Endothelial cell of umbilical vein (primary cell): ENCODE measurements at regions of chr20 and their contacts with region 1.

Region 1: GRCh38 chr20:49713753-49714712 is at the start of gene B4GALT5:
- DNase-seq: peak; percentile 78
- H3K4me3 ChIP-seq: peak within 1 kb of the TSS; percentile 81 to 93 (median 87)
- H3K27ac ChIP-seq: peak within 1 kb of the TSS; percentile 79
- H3K4me1 ChIP-seq: peaks cover 23% of the 10 kb centered on the region
- H3K27me3 ChIP-seq: no peaks in the 10 kb centered on the region
- CTCF ChIP-seq: no peak
- POLR2A ChIP-seq: peak; percentile 46
- total RNA-seq, gene B4GALT5: 58.5 and 70.1 TPM in 2 replicates

Region 2: GRCh38 chr20:49323622-49324238 is 390.3 kb before region 1 on chr20:
- CTCF ChIA-PET with region 1: no interaction called
- POLR2A ChIA-PET with region 1: no interaction called
- dilution Hi-C with region 1: no loop called
- intact Hi-C with region 1: no loop called
- DNase-seq: peak; percentile 89
- H3K4me3 ChIP-seq: no peak overlapping the region
- H3K27ac ChIP-seq: peak overlapping the region; percentile 19
- H3K4me1 ChIP-seq: peaks cover 12% of the 10 kb centered on the region
- H3K27me3 ChIP-seq: peaks cover 31 to 33% of the 10 kb centered on the region in 2 experiments
- CTCF ChIP-seq: peak; percentile 12 to 30
- POLR2A ChIP-seq: no peak

Region 3: GRCh38 chr20:49661560-49662329 is 52.3 kb before region 1 on chr20:
- CTCF ChIA-PET with region 1: interaction called, 4 read pairs
- POLR2A ChIA-PET with region 1: no interaction called
- dilution Hi-C with region 1: no loop called
- intact Hi-C with region 1: loop called (anchors 5 kb)
- DNase-seq: peak; percentile 52
- H3K4me3 ChIP-seq: no peak overlapping the region
- H3K27ac ChIP-seq: no peak overlapping the region
- H3K4me1 ChIP-seq: peaks cover 19% of the 10 kb centered on the region
- H3K27me3 ChIP-seq: no peaks in the 10 kb centered on the region
- CTCF ChIP-seq: no peak
- POLR2A ChIP-seq: no peak

Region 4: GRCh38 chr20:49699200-49699992 is 14.6 kb before region 1 on chr20:
- CTCF ChIA-PET with region 1: interaction called, 4 read pairs
- POLR2A ChIA-PET with region 1: no interaction called
- dilution Hi-C with region 1: no loop called
- intact Hi-C with region 1: loop called (anchors 1 kb)
- DNase-seq: peak; percentile 57
- H3K4me3 ChIP-seq: no peak overlapping the region
- H3K27ac ChIP-seq: peak overlapping the region; percentile 98
- H3K4me1 ChIP-seq: peaks cover 73% of the 10 kb centered on the region
- H3K27me3 ChIP-seq: no peaks in the 10 kb centered on the region
- CTCF ChIP-seq: no peak
- POLR2A ChIP-seq: no peak

Region 5: DNA sequence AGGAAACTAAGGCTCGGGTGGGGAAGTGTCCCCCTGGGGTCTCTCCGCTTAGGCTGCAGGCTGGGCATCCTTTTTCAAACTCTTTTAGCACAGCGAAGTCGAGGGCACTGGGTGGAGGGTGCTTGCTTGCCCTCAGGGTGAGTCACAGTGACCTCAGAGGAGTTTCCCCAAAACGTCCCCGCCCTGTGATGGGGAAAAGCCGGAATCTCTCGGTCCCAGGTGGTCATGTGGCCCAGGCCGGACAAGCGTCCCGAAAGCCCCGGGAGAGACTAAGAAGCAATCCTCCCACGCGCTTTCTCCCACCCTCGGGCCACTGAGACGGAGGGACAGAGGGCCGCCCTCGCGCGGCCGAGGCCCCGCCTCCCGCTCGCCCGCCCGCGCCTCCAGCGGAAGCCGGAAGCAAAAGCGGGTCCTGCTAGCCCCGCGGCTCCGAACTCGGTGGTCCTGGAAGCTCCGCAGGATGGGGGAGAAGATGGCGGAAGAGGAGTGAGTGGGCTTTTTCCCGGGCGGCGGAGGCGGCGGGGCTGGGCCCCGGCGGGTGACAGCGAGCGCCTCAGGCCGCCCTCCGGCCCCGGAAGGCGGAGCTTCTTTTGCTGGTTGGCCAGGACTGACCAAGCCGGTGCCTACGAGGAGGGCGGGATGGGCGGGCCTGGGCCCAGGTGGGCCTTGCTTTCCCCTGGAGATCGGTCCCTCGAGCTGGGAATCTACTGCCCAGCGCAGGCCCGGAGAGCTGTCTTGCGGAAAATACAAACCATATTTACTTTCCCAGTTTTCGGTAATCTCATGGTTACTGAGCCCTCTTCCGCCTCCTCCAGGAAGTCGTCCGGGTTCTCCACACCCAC is 98.7 kb after region 1 on chr20 and contains the start of gene SLC9A8:
- CTCF ChIA-PET with region 1: no interaction called
- POLR2A ChIA-PET with region 1: no interaction called
- dilution Hi-C with region 1: no loop called
- intact Hi-C with region 1: loop called (anchors 2 kb)
- DNase-seq: peak; percentile 87
- H3K4me3 ChIP-seq: peak within 1 kb of the TSS; percentile 89 to 91 (median 91)
- H3K27ac ChIP-seq: peak within 1 kb of the TSS; percentile 82
- H3K4me1 ChIP-seq: peaks cover 12% of the 10 kb centered on the region
- H3K27me3 ChIP-seq: no peaks in the 10 kb centered on the region
- CTCF ChIP-seq: peak; percentile 27 to 60
- POLR2A ChIP-seq: peak; percentile 77
- total RNA-seq, gene SLC9A8: 11.2 and 14.4 TPM in 2 replicates